Activated CD4-positive, alpha-beta T cell treated with anti-CD3 and anti-CD28 coated beads for 36 hours (primary cell): ENCODE measurements at regions of chr20 and their contacts with region 1.

Region 1: DNA sequence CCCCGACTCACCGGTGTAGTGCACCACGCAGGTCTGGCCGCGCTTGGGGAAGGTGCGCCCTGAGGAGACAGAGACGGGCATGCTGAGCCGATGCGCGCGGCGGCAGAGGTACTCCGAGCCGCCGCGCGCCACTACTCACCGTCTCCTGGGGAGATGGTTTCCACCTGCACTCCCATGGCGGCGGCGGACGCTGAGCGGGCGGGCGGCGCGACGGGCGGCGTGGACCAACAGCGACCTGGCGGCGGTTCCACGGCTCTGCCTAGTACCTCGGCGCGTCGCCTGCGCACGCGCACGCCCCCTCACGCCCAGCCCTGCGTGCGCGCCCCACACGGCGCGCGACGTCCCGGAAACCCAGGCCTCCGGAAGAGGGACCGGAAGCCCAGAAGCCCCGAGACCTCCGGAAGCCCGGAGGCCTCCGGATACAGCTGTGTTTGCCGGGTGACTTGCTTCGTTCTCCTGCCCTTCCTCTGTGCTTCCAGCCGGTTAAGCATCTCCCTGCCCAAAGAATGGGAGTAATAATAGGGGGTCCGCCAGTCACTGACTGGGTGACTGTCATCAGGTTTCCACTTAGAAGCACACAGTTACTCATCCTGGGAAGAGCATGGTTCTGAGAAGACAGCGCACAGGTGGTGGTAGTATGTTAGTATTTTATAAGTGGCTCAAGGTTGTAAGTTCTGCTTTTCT is at the start of gene FKBP1A:
- DNase-seq: peak; percentile 95
- ATAC-seq: peak; percentile 82
- H3K4me3 Mint-ChIP-seq: peak within 1 kb of the TSS; percentile 93
- H3K27ac Mint-ChIP-seq: peak within 1 kb of the TSS; percentile 94
- H3K4me1 Mint-ChIP-seq: peaks cover 56% of the 10 kb centered on the region
- H3K27me3 Mint-ChIP-seq: no peaks in the 10 kb centered on the region
- total RNA-seq, gene FKBP1A: 265 to 316 TPM

Region 2: DNA sequence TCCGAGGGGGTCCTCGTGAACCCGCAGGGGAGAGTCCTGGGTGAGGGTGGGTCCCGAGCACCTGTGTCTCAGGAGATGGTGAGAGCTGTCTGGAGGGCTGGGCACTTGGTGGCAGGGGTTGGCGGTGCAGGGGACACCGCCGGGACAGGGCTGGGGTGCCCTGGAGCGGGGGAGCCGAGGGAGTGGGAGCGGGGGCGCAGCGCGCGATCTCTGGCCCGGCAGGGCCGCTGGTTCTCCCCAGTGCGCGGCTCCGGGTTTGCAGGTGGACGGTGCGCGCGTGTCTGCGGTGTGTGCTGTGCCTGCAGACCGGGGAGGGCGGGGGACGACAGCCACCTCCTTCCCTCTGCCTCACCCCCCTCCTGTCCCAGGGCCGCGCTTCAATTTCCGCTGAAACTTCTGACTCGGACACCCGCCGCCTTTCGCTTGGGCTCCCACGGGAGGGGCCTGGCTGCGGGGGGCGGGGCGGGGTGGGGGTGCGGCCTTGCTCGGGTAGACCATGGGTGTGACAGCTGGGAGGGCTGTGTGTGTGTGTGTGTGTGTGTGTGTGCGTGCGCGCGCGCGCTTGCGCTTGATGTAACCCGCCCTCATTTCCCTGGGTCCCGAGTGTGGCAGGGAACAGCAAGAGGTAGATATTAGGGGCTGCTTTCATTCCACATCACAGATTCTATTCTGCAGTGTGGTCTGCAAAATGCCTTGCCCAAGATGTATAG is 1011.2 kb before region 1 on chr20:
- CTCF ChIA-PET with region 1: no interaction called
- POLR2A ChIA-PET with region 1: no interaction called
- intact Hi-C with region 1: loop called in 1 of 2 experiments (anchors 2 kb)
- DNase-seq: peak; percentile 88
- ATAC-seq: peak; percentile 70
- H3K4me3 Mint-ChIP-seq: peak overlapping the region; percentile 81
- H3K27ac Mint-ChIP-seq: peak overlapping the region; percentile 83
- H3K4me1 Mint-ChIP-seq: peaks cover 14% of the 10 kb centered on the region
- H3K27me3 Mint-ChIP-seq: no peaks in the 10 kb centered on the region

Region 3: GRCh38 chr20:1225783-1226654 is 166.9 kb before region 1 on chr20 and contains the start of gene RAD21L1:
- CTCF ChIA-PET with region 1: no interaction called
- POLR2A ChIA-PET with region 1: no interaction called
- intact Hi-C with region 1: loop called (anchors 1 to 5 kb)
- DNase-seq: peak; percentile 94
- ATAC-seq: peak; percentile 85
- H3K4me3 Mint-ChIP-seq: peak within 1 kb of the TSS; percentile 75
- H3K27ac Mint-ChIP-seq: peak within 1 kb of the TSS; percentile 79
- H3K4me1 Mint-ChIP-seq: peaks cover 11% of the 10 kb centered on the region
- H3K27me3 Mint-ChIP-seq: peaks cover 9% of the 10 kb centered on the region
- total RNA-seq, gene RAD21L1: 0.32 TPM in 1 of 2 experiments, not detected in the other

Region 4: GRCh38 chr20:1313236-1313964 is 79.6 kb before region 1 on chr20:
- CTCF ChIA-PET with region 1: interaction called, 6 read pairs
- POLR2A ChIA-PET with region 1: no interaction called
- intact Hi-C with region 1: loop called in 1 of 2 experiments (anchors 1 kb)
- DNase-seq: peak; percentile 82
- ATAC-seq: peak; percentile 89
- H3K4me3 Mint-ChIP-seq: no peak overlapping the region
- H3K27ac Mint-ChIP-seq: no peak overlapping the region
- H3K4me1 Mint-ChIP-seq: peaks cover 3% of the 10 kb centered on the region
- H3K27me3 Mint-ChIP-seq: no peaks in the 10 kb centered on the region

Region 5: GRCh38 chr20:1357921-1358671 is 34.9 kb before region 1 on chr20:
- CTCF ChIA-PET with region 1: interaction called, 5 read pairs
- POLR2A ChIA-PET with region 1: no interaction called
- intact Hi-C with region 1: loop called (anchors 2 kb)
- DNase-seq: peak; percentile 49
- ATAC-seq: peak; percentile 93
- H3K4me3 Mint-ChIP-seq: peak overlapping the region; percentile 54
- H3K27ac Mint-ChIP-seq: peak overlapping the region; percentile 70
- H3K4me1 Mint-ChIP-seq: peaks cover 56% of the 10 kb centered on the region
- H3K27me3 Mint-ChIP-seq: no peaks in the 10 kb centered on the region

Region 6: GRCh38 chr20:1377984-1378734 is 14.8 kb before region 1 on chr20:
- CTCF ChIA-PET with region 1: interaction called, 11 read pairs
- POLR2A ChIA-PET with region 1: interaction called, 9 read pairs
- intact Hi-C with region 1: loop called (anchors 1 to 2 kb)
- DNase-seq: peak; percentile 50
- ATAC-seq: peak; percentile 33
- H3K4me3 Mint-ChIP-seq: no peak overlapping the region
- H3K27ac Mint-ChIP-seq: peak overlapping the region; percentile 88
- H3K4me1 Mint-ChIP-seq: peaks cover 84% of the 10 kb centered on the region
- H3K27me3 Mint-ChIP-seq: no peaks in the 10 kb centered on the region

Region 7: GRCh38 chr20:1503564-1504227 is 110.7 kb after region 1 on chr20:
- CTCF ChIA-PET with region 1: interaction called, 4 read pairs
- POLR2A ChIA-PET with region 1: no interaction called
- intact Hi-C with region 1: loop called in 1 of 2 experiments (anchors 1 kb)
- DNase-seq: peak; percentile 88
- ATAC-seq: peak; percentile 100
- H3K4me3 Mint-ChIP-seq: no peak overlapping the region
- H3K27ac Mint-ChIP-seq: no peak overlapping the region
- H3K4me1 Mint-ChIP-seq: peaks cover 6% of the 10 kb centered on the region
- H3K27me3 Mint-ChIP-seq: peaks cover 19% of the 10 kb centered on the region